ENCODE measurements at regions of chr7 and their contacts with region 1.

Region 1: GRCh38 chr7:85890244-85890811 is 703.5 kb upstream of the SEMA3D start:
- DNase-seq: no peak
- H3K4me3 Mint-ChIP-seq: no peak overlapping the region
- H3K27ac Mint-ChIP-seq: no peak overlapping the region
- H3K4me1 Mint-ChIP-seq: no peaks in the 10 kb centered on the region
- H3K27me3 Mint-ChIP-seq: no peaks in the 10 kb centered on the region

Region 2: GRCh38 chr7:84663224-84663623 is 1227.1 kb before region 1 on chr7:
- intact Hi-C with region 1: no loop called
- DNase-seq: no peak
- H3K4me3 Mint-ChIP-seq: no peak overlapping the region
- H3K27ac Mint-ChIP-seq: no peak overlapping the region
- H3K4me1 Mint-ChIP-seq: no peaks in the 10 kb centered on the region
- H3K27me3 Mint-ChIP-seq: no peaks in the 10 kb centered on the region

Region 3: GRCh38 chr7:85954961-85955360 is 64.6 kb after region 1 on chr7:
- intact Hi-C with region 1: loop called (anchors 10 kb)
- DNase-seq: no peak
- H3K4me3 Mint-ChIP-seq: no peak overlapping the region
- H3K27ac Mint-ChIP-seq: no peak overlapping the region
- H3K4me1 Mint-ChIP-seq: no peaks in the 10 kb centered on the region
- H3K27me3 Mint-ChIP-seq: no peaks in the 10 kb centered on the region

Region 4: DNA sequence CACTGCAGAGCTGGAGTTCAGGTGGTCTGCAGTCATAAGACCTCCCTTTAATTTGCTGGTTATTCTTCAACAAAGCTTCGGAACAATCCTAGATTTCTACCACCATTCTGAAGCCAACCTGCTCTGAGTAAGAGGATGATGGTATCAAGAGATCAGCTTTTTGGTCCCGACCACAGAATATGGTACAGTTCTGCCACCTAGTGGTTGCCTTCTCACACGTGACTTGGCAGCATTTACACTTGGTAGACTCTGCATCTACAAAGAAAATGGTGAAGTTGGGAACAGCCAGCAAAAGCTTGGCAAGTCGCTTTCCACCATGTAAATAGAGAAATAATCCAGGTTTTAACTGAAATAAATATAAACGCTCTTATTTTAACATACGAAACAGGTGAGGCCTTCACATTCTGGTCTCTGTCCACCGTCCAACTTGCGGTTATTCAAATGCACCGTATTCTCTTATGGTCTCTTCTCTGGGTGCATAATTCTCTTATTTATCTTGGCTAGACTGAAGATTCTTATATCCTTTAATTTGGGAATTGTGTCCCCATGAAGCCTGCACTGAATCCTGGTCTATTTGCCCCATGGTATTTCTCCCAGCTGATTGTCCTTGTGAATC is 579.5 kb after region 1 on chr7:
- intact Hi-C with region 1: loop called (anchors 2 kb)
- DNase-seq: peak; percentile 84
- H3K4me3 Mint-ChIP-seq: no peak overlapping the region
- H3K27ac Mint-ChIP-seq: no peak overlapping the region
- H3K4me1 Mint-ChIP-seq: no peaks in the 10 kb centered on the region
- H3K27me3 Mint-ChIP-seq: no peaks in the 10 kb centered on the region